Activated T-helper 1 cell treated with anti-CD3 and anti-CD28 coated beads, Interleukin-12 subunit alpha, Interleukin-12 subunit beta, Interleukin-2, Interleukin-4 antibody, amounts not matched to agents 30 ng/mL and 10 ng/mL and 1 ng/mL, durations not matched to agents 14 hours and 24 hours and 36 hours (primary cell): ENCODE measurements at regions of chr4 and their contacts with region 1.

Region 1: DNA sequence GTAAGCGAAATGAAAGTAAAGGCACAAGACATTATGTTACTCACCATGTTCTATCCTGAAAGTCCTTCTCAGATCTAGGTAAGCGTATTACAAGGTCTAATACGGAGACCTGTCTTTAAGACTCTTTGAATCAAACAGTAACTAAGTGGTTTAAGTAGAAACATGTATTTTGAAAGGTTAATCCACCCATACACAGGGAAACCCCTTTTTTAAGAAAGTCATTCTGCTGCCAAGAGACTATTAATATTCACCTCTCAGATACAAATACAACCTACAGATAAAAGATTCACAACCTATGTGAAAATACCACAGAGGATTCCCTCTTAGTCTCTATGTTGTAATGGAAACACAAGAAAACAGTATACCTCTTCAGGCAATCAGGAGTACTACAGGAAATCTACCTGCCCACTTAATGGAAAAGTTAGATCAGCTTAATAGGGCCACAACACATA is 63.2 kb upstream of the TNIP3 start:
- DNase-seq: no peak
- H3K4me3 Mint-ChIP-seq: peak overlapping the region; percentile 76
- H3K27ac Mint-ChIP-seq: peak overlapping the region; percentile 83
- H3K4me1 Mint-ChIP-seq: peaks cover 38% of the 10 kb centered on the region
- H3K27me3 Mint-ChIP-seq: no peaks in the 10 kb centered on the region

Region 2: DNA sequence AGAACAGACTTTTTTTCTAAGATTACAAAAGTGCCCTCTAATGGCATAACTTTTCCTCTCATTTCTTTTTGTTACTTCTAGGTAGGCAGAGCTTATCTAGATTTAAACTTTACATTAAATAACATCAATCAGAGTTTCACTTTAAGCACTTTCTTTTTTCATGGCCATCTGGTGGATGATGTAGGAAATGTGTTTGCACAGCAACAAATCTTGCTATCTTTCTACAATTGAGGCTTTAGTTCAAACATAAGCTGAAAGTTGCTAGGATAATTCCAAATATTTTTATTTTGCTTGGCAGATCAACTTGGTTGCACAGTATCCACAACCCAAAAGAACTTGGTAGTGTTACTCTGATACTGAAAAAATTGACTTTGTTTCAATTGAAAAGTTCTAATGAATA is 177.1 kb before region 1 on chr4:
- intact Hi-C with region 1: loop called (anchors 2 kb)
- DNase-seq: no peak
- H3K4me3 Mint-ChIP-seq: no peak overlapping the region
- H3K27ac Mint-ChIP-seq: no peak overlapping the region
- H3K4me1 Mint-ChIP-seq: no peaks in the 10 kb centered on the region
- H3K27me3 Mint-ChIP-seq: peaks cover 45% of the 10 kb centered on the region

Region 3: GRCh38 chr4:121154103-121154515 is 73.3 kb before region 1 on chr4:
- intact Hi-C with region 1: loop called (anchors 1 kb)
- DNase-seq: peak; percentile 39
- H3K4me3 Mint-ChIP-seq: peak overlapping the region; percentile 56
- H3K27ac Mint-ChIP-seq: peak overlapping the region; percentile 73
- H3K4me1 Mint-ChIP-seq: peaks cover 74% of the 10 kb centered on the region
- H3K27me3 Mint-ChIP-seq: peaks cover 9% of the 10 kb centered on the region

Region 4: GRCh38 chr4:121243485-121243884 is 16.1 kb after region 1 on chr4:
- intact Hi-C with region 1: loop called (anchors 1 kb)
- DNase-seq: no peak
- H3K4me3 Mint-ChIP-seq: peak overlapping the region; percentile 8
- H3K27ac Mint-ChIP-seq: peak overlapping the region; percentile 25
- H3K4me1 Mint-ChIP-seq: peaks cover 20% of the 10 kb centered on the region
- H3K27me3 Mint-ChIP-seq: no peaks in the 10 kb centered on the region

Region 5: DNA sequence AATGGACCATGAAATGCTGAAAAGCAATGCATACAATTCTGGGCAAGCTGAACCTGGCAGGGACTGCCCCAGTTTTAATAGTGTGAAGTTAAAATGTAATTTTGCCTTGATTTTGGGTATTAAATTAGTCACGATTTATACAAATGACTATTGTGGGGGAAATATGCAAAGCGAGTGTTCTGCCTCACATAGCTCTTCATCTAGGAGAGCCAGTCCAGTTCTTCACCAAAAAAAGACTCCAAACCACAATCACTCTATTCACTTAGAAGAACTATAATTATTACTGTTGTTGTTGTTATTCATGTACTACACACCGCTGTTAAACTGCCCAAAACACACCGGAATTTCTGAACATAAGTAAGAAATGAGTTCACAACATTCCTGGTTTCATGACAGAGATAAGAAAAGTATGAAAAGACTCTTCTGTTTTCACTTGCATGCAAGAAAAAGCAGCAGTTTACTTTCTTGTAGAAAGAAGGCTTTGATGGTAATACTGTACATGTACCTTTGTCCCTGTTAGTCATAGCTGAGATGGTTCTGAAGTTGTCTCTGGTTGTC is 51.5 kb after region 1 on chr4:
- intact Hi-C with region 1: loop called (anchors 1 kb)
- DNase-seq: no peak
- H3K4me3 Mint-ChIP-seq: no peak overlapping the region
- H3K27ac Mint-ChIP-seq: no peak overlapping the region
- H3K4me1 Mint-ChIP-seq: peaks cover 6% of the 10 kb centered on the region
- H3K27me3 Mint-ChIP-seq: peaks cover 8% of the 10 kb centered on the region

Region 6: DNA sequence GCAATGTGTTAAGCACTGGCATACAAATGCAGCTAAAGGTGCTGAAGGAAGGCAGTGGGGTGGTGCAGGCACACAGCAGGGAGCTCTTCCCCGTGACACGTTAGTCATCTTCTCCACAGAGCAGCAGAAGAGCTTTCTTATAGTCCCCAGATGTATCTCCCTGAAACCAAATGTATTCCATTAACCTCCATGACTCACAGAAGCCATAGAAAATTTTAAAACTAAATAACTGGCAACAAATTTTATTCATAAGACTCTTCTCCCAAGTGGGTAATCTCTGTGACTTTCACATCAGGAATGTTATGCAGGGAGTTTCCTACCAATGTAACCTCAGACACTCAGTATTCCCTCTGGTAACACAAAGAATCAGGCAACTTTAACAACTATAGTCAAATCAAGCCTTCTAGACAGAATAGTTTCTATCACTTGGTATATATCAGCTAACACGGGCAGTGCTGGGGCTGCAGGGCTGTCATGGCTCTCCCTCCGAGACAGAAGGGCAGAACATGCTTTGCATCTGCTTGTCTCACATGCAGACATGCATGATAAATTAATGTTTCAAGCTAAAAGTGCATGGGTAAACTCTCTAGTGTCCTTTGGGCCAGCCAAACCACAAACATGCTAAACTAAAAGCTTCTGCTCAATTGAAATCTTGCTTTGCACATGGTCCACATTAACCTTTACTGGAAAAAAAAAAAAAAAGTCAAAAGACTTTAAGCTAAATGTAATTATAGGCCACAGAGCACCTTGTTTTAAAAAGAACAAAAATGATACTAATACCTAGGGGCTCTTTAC is 441.2 kb after region 1 on chr4:
- intact Hi-C with region 1: no loop called
- DNase-seq: no peak
- H3K4me3 Mint-ChIP-seq: no peak overlapping the region
- H3K27ac Mint-ChIP-seq: peak overlapping the region; percentile 61
- H3K4me1 Mint-ChIP-seq: no peaks in the 10 kb centered on the region
- H3K27me3 Mint-ChIP-seq: no peaks in the 10 kb centered on the region